ENCODE measurements at regions of chrX and their contacts with region 1.

Region 1: GRCh38 chrX:131792789-131793462 is 230.2 kb upstream of the STK26 start:
- DNase-seq: peak; percentile 58 to 94
- H3K4me3 ChIP-seq: peak overlapping the region; percentile 55 to 68
- H3K27ac ChIP-seq: peak overlapping the region; percentile 78 to 93
- H3K4me1 ChIP-seq: no peaks in the 10 kb centered on the region
- H3K27me3 ChIP-seq: peaks cover 3% of the 10 kb centered on the region
- CTCF ChIP-seq: peak; percentile 22 to 60 (median 34)

Region 2: GRCh38 chrX:131595120-131595519 is 197.8 kb before region 1 on chrX:
- intact Hi-C with region 1: no loop called
- DNase-seq: no peak
- H3K4me3 ChIP-seq: no peak overlapping the region
- H3K27ac ChIP-seq: no peak overlapping the region
- H3K4me1 ChIP-seq: no peaks in the 10 kb centered on the region
- H3K27me3 ChIP-seq: no peaks in the 10 kb centered on the region
- CTCF ChIP-seq: no peak

Region 3: GRCh38 chrX:131710431-131711045 is 82.4 kb before region 1 on chrX:
- intact Hi-C with region 1: loop called (anchors 2 kb)
- DNase-seq: no peak
- H3K4me3 ChIP-seq: no peak overlapping the region
- H3K27ac ChIP-seq: peak overlapping the region; percentile 17 to 19
- H3K4me1 ChIP-seq: no peaks in the 10 kb centered on the region
- H3K27me3 ChIP-seq: no peaks in the 10 kb centered on the region
- CTCF ChIP-seq: no peak

Region 4: DNA sequence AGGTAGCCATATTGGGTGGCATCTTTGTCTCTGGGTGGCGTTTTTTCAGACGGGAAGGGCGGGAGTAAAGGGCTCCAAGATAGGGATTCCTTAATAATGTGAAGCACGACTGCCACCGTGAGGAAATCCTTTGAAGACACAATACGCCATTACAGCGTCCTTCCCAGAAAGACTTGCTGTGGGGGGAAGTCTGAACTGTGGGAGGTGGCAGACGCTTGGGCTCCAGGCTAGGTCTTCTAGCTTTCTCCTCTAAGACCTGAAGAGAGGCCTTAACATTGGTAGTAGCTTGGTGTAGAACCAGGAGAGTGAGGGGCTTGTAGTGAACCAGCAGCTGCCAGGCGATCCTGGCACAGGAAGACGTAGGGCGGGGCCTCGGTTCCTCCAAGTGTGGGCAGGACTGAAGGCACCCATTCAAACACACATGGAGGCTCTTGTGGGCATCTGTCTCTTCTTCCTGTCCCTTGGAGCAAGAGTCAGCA is 51.8 kb before region 1 on chrX:
- intact Hi-C with region 1: loop called (anchors 2 kb)
- DNase-seq: peak; percentile 52 to 91
- H3K4me3 ChIP-seq: peak overlapping the region; percentile 48 to 65
- H3K27ac ChIP-seq: peak overlapping the region; percentile 69 to 82
- H3K4me1 ChIP-seq: no peaks in the 10 kb centered on the region
- H3K27me3 ChIP-seq: no peaks in the 10 kb centered on the region
- CTCF ChIP-seq: peak; percentile 31 to 46 (median 38)

Region 5: DNA sequence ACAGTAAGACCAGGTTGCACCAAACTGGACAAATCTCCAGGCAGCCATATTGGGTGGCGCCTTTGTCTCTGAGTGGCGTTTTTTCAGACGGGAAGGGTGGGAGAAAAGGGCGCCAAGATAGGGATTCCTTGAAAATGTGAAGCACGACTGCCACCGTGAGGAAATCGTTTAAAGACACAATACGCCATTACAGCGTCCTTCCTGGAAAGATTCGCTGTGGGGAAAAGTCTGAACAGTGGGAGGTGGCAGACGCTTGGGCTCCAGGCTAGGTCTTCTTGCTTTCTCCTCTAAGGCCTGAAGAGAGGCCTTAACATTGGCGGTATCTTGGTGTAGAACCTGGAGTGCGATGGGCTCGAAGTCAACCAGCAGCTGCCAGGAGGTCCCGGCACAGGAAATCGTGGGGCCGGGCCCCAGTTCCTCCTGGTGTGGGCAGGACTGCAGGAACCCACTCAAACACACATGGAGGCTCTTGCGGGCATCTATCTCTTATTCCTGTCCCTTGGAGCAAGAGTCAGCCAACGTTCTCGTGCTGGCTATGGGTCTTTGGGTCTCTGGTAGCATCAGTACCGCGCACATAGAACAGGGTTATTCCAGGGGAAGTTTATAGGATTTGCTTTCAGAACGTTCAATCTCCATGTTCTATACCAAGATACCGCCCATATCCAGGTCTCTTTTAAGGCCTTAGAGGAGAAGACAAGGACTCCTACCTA is 40.3 kb before region 1 on chrX:
- intact Hi-C with region 1: loop called (anchors 2 kb)
- DNase-seq: peak; percentile 30 to 91
- H3K4me3 ChIP-seq: peak overlapping the region; percentile 45 to 71
- H3K27ac ChIP-seq: peak overlapping the region; percentile 79 to 87
- H3K4me1 ChIP-seq: no peaks in the 10 kb centered on the region
- H3K27me3 ChIP-seq: no peaks in the 10 kb centered on the region
- CTCF ChIP-seq: peak in 2 of 3 experiments; percentile 38 to 42

Region 6: GRCh38 chrX:131763674-131764073 is 29.3 kb before region 1 on chrX:
- intact Hi-C with region 1: loop called (anchors 1 kb)
- DNase-seq: peak; percentile 35 to 93
- H3K4me3 ChIP-seq: peak overlapping the region; percentile 24 to 60
- H3K27ac ChIP-seq: no peak overlapping the region
- H3K4me1 ChIP-seq: no peaks in the 10 kb centered on the region
- H3K27me3 ChIP-seq: no peaks in the 10 kb centered on the region
- CTCF ChIP-seq: peak; percentile 44 to 67 (median 60)

Region 7: GRCh38 chrX:131812836-131813825 is 20.2 kb after region 1 on chrX:
- intact Hi-C with region 1: no loop called
- DNase-seq: peak; percentile 39 to 88
- H3K4me3 ChIP-seq: peak overlapping the region; percentile 42 to 68
- H3K27ac ChIP-seq: peak overlapping the region; percentile 72 to 73
- H3K4me1 ChIP-seq: no peaks in the 10 kb centered on the region
- H3K27me3 ChIP-seq: no peaks in the 10 kb centered on the region
- CTCF ChIP-seq: peak; percentile 16 to 73 (median 56)